ENCODE measurements at regions of chr2 and their contacts with region 1.

Region 1: GRCh38 chr2:54329482-54330161 is 73.6 kb upstream of the TSPYL6 start:
- DNase-seq: no peak
- H3K4me3 ChIP-seq: no peak overlapping the region
- H3K27ac ChIP-seq: peak overlapping the region; percentile 78 to 98 (median 91)
- H3K4me1 ChIP-seq: peaks cover 7 to 17% of the 10 kb centered on the region in 2 donors
- H3K27me3 ChIP-seq: no peaks in the 10 kb centered on the region
- CTCF ChIP-seq: no peak
- POLR2A ChIP-seq: no peak

Region 2: GRCh38 chr2:54212456-54212855 is 117.2 kb before region 1 on chr2:
- intact Hi-C with region 1: loop called (anchors 10 kb)
- DNase-seq: no peak
- H3K4me3 ChIP-seq: no peak overlapping the region
- H3K27ac ChIP-seq: no peak overlapping the region
- H3K4me1 ChIP-seq: peaks cover 19 to 22% of the 10 kb centered on the region in 2 donors
- H3K27me3 ChIP-seq: no peaks in the 10 kb centered on the region
- CTCF ChIP-seq: no peak
- POLR2A ChIP-seq: no peak

Measured in thyroid gland (tissue), 4 donors.